ENCODE measurements at regions of chr4 and their contacts with region 1.

Region 1: DNA sequence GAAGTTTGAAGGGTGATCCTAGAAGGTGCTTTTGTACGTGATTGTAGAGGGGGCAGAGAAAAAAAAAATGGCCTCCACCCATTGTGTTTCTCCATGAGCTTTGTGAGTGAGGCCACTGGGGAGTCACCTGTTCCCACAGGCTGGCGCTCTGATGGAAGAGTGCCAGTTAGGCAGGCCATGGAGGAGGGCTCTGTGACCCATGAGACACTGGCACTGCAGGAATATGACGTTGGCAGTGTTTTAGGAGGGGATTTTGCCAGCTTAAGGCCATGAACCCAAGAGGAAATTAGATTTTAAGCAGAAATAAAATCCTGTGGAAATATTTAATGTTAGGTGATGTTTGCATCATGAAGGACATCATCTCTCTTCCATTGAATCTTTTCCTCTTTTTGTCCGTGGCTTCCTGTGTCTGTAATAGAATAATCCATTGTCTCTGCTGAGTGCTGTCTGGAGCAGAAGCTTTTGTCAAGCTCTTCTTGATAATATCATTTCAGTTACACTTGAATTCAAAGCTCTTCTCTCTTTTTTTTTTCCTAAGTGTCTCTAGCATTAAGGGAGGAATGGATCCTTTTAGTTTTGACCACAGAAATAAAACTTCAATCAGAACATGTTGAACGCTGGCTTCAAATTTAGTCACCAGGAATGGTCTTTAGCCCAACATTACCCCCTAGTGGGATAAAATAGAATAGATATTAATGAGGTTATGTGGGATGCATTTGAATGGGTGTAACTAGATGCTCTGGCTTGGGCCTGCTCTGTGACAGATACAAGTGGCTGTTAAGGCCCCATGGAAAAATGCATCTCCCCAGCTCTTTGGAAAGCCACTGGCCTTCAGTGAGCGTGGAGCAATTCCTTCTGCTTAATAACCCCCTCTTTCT is 41.0 kb upstream of the UCP1 start:
- DNase-seq: peak; percentile 53
- ATAC-seq: peak; percentile 92
- H3K4me3 ChIP-seq: peak overlapping the region in 1 of 3 experiments; percentile 9; a peak in 1 of 6 replicates
- H3K27ac ChIP-seq: no peak overlapping the region
- H3K4me1 ChIP-seq: peaks cover 27% of the 10 kb centered on the region
- H3K27me3 ChIP-seq: no peaks in the 10 kb centered on the region
- CTCF ChIP-seq: peak; percentile 69
- EP300 ChIP-seq: no peak
- POLR2A ChIP-seq: no peak
- RAD21 ChIP-seq: peak; percentile 32; the same call in 1 of the 2 replicates

Region 2: DNA sequence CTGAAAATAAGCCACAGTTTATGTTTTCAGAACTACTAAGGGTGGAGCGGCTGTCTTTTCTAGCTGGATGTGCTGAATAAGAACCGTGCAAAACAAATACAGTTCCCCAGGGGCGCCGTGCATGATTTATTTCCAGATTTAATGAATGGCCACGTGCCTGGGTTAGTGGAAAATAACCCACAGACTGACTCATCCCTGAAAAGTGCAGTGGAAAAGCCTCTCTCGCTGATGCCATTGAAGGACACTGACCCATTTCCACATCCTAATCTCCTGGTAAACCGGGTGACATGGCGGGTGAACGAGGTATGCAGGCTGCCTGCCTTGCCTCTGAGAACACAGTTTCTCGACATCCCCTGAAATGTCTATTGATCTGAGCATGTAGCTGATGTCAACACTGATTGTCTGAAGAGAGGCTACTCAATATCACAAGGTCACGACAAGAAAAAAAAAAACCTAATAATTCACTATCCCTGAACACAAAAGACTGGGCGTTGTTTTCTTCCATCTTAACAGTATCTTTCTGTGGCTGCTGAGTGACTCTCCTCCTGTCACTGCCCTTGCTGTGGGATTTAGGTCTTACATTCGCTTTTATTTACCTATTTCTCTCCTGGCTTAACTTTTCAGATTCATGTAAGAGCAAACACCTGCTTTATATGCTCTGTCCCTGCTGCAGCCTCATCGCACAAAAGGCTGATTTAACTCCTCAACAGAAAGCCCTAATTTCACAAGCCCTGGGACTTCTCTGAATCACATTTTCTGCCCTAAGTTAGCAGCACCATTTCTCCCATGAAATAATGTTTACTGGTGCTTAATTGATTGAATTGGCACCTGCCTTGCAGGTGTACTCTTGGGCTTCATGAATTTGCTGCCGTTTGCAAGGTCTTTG is 313.2 kb before region 1 on chr4:
- CTCF ChIA-PET with region 1: no interaction called
- POLR2A ChIA-PET with region 1: no interaction called
- in situ Hi-C with region 1: no loop called
- intact Hi-C with region 1: no loop called
- DNase-seq: peak; percentile 6
- ATAC-seq: peak; percentile 65
- H3K4me3 ChIP-seq: no peak overlapping the region
- H3K27ac ChIP-seq: no peak overlapping the region
- H3K4me1 ChIP-seq: 0 out of 2 replicates have a peak, but pooled peaks cover 8% of the 10 kb centered on the region
- H3K27me3 ChIP-seq: peaks cover 0 to 8% of the 10 kb centered on the region in 2 experiments; a peak in 2 of 5 replicates
- CTCF ChIP-seq: no peak
- EP300 ChIP-seq: no peak
- POLR2A ChIP-seq: no peak
- RAD21 ChIP-seq: no peak

Region 3: GRCh38 chr4:140427106-140427961 is 182.5 kb before region 1 on chr4 and contains the start of gene CLGN:
- CTCF ChIA-PET with region 1: interaction called, 5 read pairs
- POLR2A ChIA-PET with region 1: no interaction called
- in situ Hi-C with region 1: no loop called
- intact Hi-C with region 1: loop called (anchors 1 kb)
- DNase-seq: peak; percentile 77
- ATAC-seq: peak; percentile 94
- H3K4me3 ChIP-seq: peak within 1 kb of the TSS; percentile 82 to 93 (median 92)
- H3K27ac ChIP-seq: peak within 1 kb of the TSS; percentile 75
- H3K4me1 ChIP-seq: peaks cover 24% of the 10 kb centered on the region
- H3K27me3 ChIP-seq: no peaks in the 10 kb centered on the region; a peak in 1 of 5 replicates
- CTCF ChIP-seq: peak; percentile 86
- EP300 ChIP-seq: no peak; a peak in 1 of 4 replicates
- POLR2A ChIP-seq: peak; percentile 66 to 80
- RAD21 ChIP-seq: peak; percentile 72
- total RNA-seq, gene CLGN: 10.0 and 17.0 TPM in 2 replicates

Region 4: DNA sequence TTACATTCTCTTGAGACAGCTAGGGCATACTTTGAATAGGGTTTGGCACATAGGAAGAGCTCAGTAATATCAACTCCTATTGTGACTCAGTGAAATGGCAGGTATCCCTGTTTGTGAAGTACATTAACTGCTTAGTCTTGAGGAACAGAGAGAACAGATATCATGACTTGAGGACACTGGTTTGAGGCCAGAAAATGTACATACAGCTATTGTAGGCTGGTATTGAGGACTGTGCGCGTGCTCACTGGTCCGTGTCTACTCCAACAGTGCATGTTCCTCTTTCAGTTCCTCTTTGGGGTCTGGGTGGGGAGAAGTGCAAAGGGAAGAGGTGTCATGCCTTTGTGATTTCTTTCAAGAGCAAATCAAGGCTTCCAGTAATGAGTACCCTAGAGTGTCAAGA is 181.0 kb after region 1 on chr4:
- CTCF ChIA-PET with region 1: no interaction called
- POLR2A ChIA-PET with region 1: no interaction called
- in situ Hi-C with region 1: no loop called
- intact Hi-C with region 1: no loop called
- DNase-seq: no peak
- ATAC-seq: no peak
- H3K4me3 ChIP-seq: no peak overlapping the region
- H3K27ac ChIP-seq: no peak overlapping the region
- H3K4me1 ChIP-seq: no peaks in the 10 kb centered on the region
- H3K27me3 ChIP-seq: 0 out of 5 replicates have a peak, but pooled peaks cover 0 to 2% of the 10 kb centered on the region in 2 experiments
- CTCF ChIP-seq: no peak
- EP300 ChIP-seq: no peak
- POLR2A ChIP-seq: no peak
- RAD21 ChIP-seq: no peak

Region 5: GRCh38 chr4:141099326-141099725 is 489.5 kb after region 1 on chr4:
- CTCF ChIA-PET with region 1: no interaction called
- POLR2A ChIA-PET with region 1: no interaction called
- in situ Hi-C with region 1: no loop called
- intact Hi-C with region 1: no loop called
- DNase-seq: no peak
- ATAC-seq: no peak
- H3K4me3 ChIP-seq: no peak overlapping the region
- H3K27ac ChIP-seq: no peak overlapping the region
- H3K4me1 ChIP-seq: no peaks in the 10 kb centered on the region
- H3K27me3 ChIP-seq: no peaks in the 10 kb centered on the region
- CTCF ChIP-seq: no peak
- EP300 ChIP-seq: no peak
- POLR2A ChIP-seq: no peak
- RAD21 ChIP-seq: no peak